K562 (cell line): ENCODE measurements at regions of chr7 and their contacts with region 1.

Region 1: DNA sequence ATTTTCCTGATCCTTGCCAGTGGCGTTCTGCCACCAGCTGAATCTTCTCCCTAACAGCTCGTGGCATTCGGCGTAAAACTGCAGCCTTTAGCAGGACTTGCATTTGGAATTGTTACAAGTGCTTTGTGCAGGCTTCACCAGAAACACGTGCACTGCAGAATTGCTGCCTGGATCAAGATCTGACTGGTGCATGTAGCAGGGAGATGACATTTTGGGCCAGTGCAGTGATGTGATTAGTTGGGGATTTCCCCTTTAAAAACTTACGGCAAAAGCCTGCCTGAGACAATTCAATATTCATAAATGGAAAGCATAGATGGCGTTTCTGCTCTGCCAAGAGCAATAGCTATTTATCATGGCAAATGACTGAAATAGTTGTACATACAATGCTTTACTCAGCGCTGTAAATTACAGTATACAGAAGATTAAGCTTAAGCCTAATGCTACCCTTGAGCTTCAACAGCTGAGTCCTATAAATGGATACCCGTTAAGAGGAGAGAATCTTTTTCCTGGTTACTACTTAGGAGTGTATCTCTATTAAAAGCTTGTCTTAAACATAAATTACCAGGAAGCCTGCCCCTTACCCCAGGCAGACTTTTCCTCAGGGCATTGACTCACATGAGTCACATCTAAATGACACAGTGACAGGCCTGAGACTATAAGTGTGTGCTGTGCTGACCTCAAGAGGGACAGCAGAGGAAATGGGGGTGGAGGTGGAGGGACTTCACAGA is 106.3 kb downstream of the ATXN7L1 start:
- DNase-seq: peak in 1 of 4 experiments; percentile 16
- ATAC-seq: peak; percentile 63
- H3K4me3 ChIP-seq: no peak overlapping the region
- H3K27ac ChIP-seq: no peak overlapping the region
- H3K4me1 ChIP-seq: no peaks in the 10 kb centered on the region
- H3K27me3 ChIP-seq: peaks cover 15 to 29% of the 10 kb centered on the region in 2 experiments; a peak in 4 of 5 replicates
- CTCF ChIP-seq: no peak
- EP300 ChIP-seq: no peak
- POLR2A ChIP-seq: no peak
- RAD21 ChIP-seq: no peak

Region 2: GRCh38 chr7:105752671-105753275 is 17.3 kb before region 1 on chr7:
- CTCF ChIA-PET with region 1: no interaction called
- POLR2A ChIA-PET with region 1: interaction called, 10 read pairs
- in situ Hi-C with region 1: no loop called
- intact Hi-C with region 1: no loop called
- DNase-seq: no peak
- ATAC-seq: no peak
- H3K4me3 ChIP-seq: no peak overlapping the region
- H3K27ac ChIP-seq: no peak overlapping the region
- H3K4me1 ChIP-seq: no peaks in the 10 kb centered on the region
- H3K27me3 ChIP-seq: peaks cover 0 to 18% of the 10 kb centered on the region in 2 experiments; a peak in 1 of 5 replicates
- CTCF ChIP-seq: no peak
- EP300 ChIP-seq: no peak
- POLR2A ChIP-seq: no peak
- RAD21 ChIP-seq: no peak

Region 3: GRCh38 chr7:105786520-105787468 is 16.7 kb after region 1 on chr7:
- CTCF ChIA-PET with region 1: no interaction called
- POLR2A ChIA-PET with region 1: interaction called, 10 read pairs
- in situ Hi-C with region 1: no loop called
- intact Hi-C with region 1: no loop called
- DNase-seq: no peak
- ATAC-seq: no peak
- H3K4me3 ChIP-seq: no peak overlapping the region
- H3K27ac ChIP-seq: no peak overlapping the region
- H3K4me1 ChIP-seq: peaks cover 4 to 6% of the 10 kb centered on the region in 2 experiments; a peak in 3 of 5 replicates
- H3K27me3 ChIP-seq: peaks cover 0 to 14% of the 10 kb centered on the region in 2 experiments; a peak in 2 of 5 replicates
- CTCF ChIP-seq: no peak
- EP300 ChIP-seq: no peak
- POLR2A ChIP-seq: no peak
- RAD21 ChIP-seq: no peak

Region 4: GRCh38 chr7:105876091-105876963 is 106.3 kb after region 1 on chr7 and contains the start of gene ATXN7L1:
- CTCF ChIA-PET with region 1: no interaction called
- POLR2A ChIA-PET with region 1: no interaction called
- in situ Hi-C with region 1: no loop called
- intact Hi-C with region 1: loop called (anchors 5 kb)
- DNase-seq: peak; percentile 97 to 99 (median 99)
- ATAC-seq: peak; percentile 95
- H3K4me3 ChIP-seq: peak within 1 kb of the TSS; percentile 57
- H3K27ac ChIP-seq: peak within 1 kb of the TSS; percentile 87
- H3K4me1 ChIP-seq: peaks cover 7 to 14% of the 10 kb centered on the region in 2 experiments; a peak in 4 of 5 replicates
- H3K27me3 ChIP-seq: peaks cover 26 to 29% of the 10 kb centered on the region in 2 experiments
- CTCF ChIP-seq: peak; percentile 17 to 80 (median 77); a peak in 3 of 6 replicates
- EP300 ChIP-seq: no peak
- POLR2A ChIP-seq: peak; percentile 93
- RAD21 ChIP-seq: peak in 1 of 2 experiments; percentile 58; a peak in 2 of 4 replicates
- polyA plus RNA-seq, gene ATXN7L1: 9.5 to 10.7 TPM